ENCODE measurements at regions of chr6 and their contacts with region 1.

Region 1: GRCh38 chr6:43913375-43914271 is 143.6 kb downstream of the VEGFA start:
- DNase-seq: no peak

Region 2: GRCh38 chr6:43926634-43927524 is 13.3 kb after region 1 on chr6:
- CTCF ChIA-PET with region 1: interaction called, 6 read pairs
- POLR2A ChIA-PET with region 1: interaction called, 11 read pairs
- DNase-seq: peak; percentile 49